Gastrocnemius medialis (tissue), 4 donors: ENCODE measurements at regions of chr5 and their contacts with region 1.

Region 1: GRCh38 chr5:87368601-87369000 is 44.1 kb downstream of the CCNH start:
- DNase-seq: no peak
- ATAC-seq: no peak
- H3K4me3 ChIP-seq: no peak overlapping the region
- H3K27ac ChIP-seq: no peak overlapping the region
- H3K4me1 ChIP-seq: peaks cover 20 to 23% of the 10 kb centered on the region in 2 donors
- H3K27me3 ChIP-seq: no peaks in the 10 kb centered on the region
- CTCF ChIP-seq: no peak
- POLR2A ChIP-seq: no peak

Region 2: GRCh38 chr5:87405472-87406155 is 37.0 kb after region 1 on chr5:
- in situ Hi-C with region 1: no loop called
- intact Hi-C with region 1: loop called (anchors 5 kb)
- DNase-seq: no peak
- ATAC-seq: no peak
- H3K4me3 ChIP-seq: no peak overlapping the region
- H3K27ac ChIP-seq: no peak overlapping the region
- H3K4me1 ChIP-seq: peaks cover 0 to 5% of the 10 kb centered on the region in 2 donors
- H3K27me3 ChIP-seq: no peaks in the 10 kb centered on the region
- CTCF ChIP-seq: no peak
- POLR2A ChIP-seq: no peak

Region 3: GRCh38 chr5:87551911-87552310 is 183.3 kb after region 1 on chr5:
- in situ Hi-C with region 1: no loop called
- intact Hi-C with region 1: no loop called
- DNase-seq: no peak
- ATAC-seq: no peak
- H3K4me3 ChIP-seq: no peak overlapping the region
- H3K27ac ChIP-seq: no peak overlapping the region
- H3K4me1 ChIP-seq: no peaks in the 10 kb centered on the region
- H3K27me3 ChIP-seq: no peaks in the 10 kb centered on the region
- CTCF ChIP-seq: no peak
- POLR2A ChIP-seq: no peak